Activated CD4-positive, alpha-beta T cell treated with anti-CD3 and anti-CD28 coated beads for 36 hours (primary cell): ENCODE measurements at regions of chr1 and their contacts with region 1.

Region 1: DNA sequence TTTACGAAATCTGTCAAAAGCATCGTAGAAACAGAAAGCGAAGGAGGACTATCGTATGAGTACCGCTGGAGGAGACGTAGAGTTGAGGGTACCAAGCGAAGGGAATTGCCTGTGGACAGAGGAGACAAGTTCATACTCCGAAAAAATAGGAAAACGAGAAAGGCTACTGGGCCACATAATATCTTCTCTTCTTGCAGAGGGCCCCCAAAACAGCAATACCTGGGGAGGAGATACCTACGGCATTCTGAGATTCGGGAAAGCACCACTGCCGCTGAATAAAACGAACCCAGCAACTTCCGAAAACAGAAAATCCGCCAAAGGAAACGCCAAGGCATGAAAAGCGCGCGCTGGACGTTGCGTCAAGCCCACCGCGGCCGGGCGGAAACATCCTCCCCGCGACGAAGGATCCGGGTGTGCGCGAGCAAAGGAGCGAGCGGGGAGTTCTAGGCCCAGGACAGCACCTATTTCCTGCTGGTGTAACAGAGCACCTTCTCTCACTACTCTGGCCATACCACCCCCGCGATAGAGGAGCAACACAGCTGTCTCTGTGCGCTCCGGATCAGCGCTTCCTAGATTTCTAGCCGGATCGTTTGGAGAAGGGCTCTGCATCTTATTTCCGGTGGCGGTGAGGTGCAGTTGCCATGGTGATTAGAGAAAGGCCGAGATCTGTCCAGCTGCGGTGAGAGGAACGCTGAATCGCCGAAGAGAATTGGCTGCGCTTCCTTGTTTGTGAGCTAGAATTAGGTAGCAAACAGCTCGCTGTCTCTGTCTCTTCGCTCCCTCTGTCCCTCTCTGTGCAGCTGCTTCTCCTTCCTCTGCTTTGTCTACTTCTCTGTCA is at the starts of genes EFCAB7 and ITGB3BP:
- DNase-seq: peak; percentile 90
- ATAC-seq: peak; percentile 93
- H3K4me3 Mint-ChIP-seq: peak within 1 kb of the TSS; percentile 89
- H3K27ac Mint-ChIP-seq: peak within 1 kb of the TSS; percentile 97
- H3K4me1 Mint-ChIP-seq: peaks cover 18% of the 10 kb centered on the region
- H3K27me3 Mint-ChIP-seq: no peaks in the 10 kb centered on the region
- total RNA-seq, gene EFCAB7: 8.5 to 9.1 TPM
- total RNA-seq, gene ITGB3BP: 81.8 to 81.9 TPM

Region 2: DNA sequence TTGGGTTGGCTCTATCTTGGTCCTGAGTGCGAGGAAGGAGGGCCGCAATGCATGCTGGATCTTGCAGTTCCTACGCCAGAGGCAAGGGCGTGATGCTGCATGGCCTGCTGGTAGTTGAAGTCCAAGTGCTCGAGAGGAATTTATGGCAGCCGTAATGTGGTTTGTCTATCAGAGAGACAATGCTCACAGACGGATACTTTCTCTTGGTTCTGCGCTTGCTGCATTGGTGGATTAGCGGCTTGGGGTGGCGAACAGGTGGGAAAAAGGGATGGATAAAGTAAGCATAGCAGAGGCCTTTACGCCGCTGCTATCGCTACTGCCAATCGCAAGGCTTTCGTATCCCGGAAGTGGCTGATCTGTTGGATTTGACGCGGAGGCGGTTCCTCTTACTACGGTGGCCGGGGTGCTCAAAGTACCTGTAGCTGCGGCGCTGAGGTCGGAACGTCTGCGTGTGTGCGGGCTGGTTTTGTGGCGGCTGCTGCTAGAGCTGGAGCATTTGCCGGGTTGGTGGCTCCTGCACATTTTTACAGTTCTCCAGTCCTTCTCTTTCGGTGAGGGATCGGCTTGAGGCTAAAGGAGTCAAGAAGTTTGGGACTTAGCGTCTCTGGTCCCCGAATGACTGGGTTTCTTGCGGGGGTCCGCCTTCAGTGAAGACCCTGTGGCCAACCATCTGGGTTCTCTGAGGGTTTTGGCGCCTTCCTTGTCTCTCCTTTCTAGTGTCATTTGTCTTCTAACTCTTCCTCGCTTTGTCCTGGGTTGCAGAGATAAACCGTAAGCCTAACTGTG is 739.2 kb before region 1 on chr1 and contains the start of gene ATG4C:
- CTCF ChIA-PET with region 1: interaction called, 3 read pairs
- POLR2A ChIA-PET with region 1: no interaction called
- intact Hi-C with region 1: loop called (anchors 1 to 5 kb)
- DNase-seq: peak; percentile 96
- ATAC-seq: peak; percentile 99
- H3K4me3 Mint-ChIP-seq: no peak within 1 kb of the TSS
- H3K27ac Mint-ChIP-seq: no peak within 1 kb of the TSS
- H3K4me1 Mint-ChIP-seq: peaks cover 17% of the 10 kb centered on the region
- H3K27me3 Mint-ChIP-seq: peaks cover 10% of the 10 kb centered on the region
- total RNA-seq, gene ATG4C: 16.2 to 17.7 TPM

Region 3: DNA sequence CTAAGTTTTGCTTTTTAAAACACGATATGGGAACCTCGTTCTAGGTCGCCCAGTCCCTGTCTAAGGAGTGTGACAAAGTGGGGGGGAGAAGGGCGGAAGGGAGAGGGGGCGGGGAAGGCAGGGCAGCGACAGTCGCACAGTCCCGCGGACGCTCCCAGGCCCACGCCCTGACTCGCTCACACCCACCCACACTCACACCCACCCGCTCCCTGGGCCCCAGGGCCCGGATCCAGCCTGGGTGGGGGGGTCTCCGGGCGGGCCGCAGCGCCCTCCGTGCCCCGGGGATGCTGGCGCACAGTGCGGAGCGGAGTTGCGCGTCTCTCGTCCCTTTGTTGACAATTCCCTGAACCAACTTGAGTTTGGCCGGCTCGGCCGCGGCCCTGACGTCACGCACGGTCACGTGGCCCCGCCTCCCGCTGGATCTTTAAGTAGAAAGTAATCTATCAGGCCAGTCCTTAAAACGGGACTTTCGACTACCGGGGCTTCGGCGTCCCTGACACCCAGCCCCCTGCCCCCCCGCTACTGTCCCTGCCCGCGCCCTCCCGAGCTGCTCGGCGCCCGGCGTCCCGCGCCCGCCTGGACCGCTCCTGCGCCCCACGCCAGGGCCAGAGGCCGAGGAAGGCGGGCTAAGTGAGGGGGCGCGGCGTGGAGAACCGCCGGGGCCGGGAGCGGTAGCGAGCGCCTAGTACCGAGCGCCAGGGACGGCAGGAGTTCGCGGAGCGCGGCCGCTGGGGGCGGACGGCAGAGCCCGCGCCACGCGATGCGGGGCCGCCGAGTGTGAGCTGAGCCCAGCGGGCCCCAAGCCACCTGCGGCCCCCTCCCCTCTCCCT is 200.8 kb before region 1 on chr1 and contains the start of gene FOXD3:
- CTCF ChIA-PET with region 1: interaction called, 3 read pairs
- POLR2A ChIA-PET with region 1: no interaction called
- intact Hi-C with region 1: loop called (anchors 2 to 5 kb)
- DNase-seq: peak; percentile 64
- ATAC-seq: peak; percentile 34
- H3K4me3 Mint-ChIP-seq: peak within 1 kb of the TSS; percentile 68
- H3K27ac Mint-ChIP-seq: peak within 1 kb of the TSS; percentile 37
- H3K4me1 Mint-ChIP-seq: peaks cover 43% of the 10 kb centered on the region
- H3K27me3 Mint-ChIP-seq: peaks cover 68% of the 10 kb centered on the region
- total RNA-seq, gene FOXD3: not detected

Region 4: DNA sequence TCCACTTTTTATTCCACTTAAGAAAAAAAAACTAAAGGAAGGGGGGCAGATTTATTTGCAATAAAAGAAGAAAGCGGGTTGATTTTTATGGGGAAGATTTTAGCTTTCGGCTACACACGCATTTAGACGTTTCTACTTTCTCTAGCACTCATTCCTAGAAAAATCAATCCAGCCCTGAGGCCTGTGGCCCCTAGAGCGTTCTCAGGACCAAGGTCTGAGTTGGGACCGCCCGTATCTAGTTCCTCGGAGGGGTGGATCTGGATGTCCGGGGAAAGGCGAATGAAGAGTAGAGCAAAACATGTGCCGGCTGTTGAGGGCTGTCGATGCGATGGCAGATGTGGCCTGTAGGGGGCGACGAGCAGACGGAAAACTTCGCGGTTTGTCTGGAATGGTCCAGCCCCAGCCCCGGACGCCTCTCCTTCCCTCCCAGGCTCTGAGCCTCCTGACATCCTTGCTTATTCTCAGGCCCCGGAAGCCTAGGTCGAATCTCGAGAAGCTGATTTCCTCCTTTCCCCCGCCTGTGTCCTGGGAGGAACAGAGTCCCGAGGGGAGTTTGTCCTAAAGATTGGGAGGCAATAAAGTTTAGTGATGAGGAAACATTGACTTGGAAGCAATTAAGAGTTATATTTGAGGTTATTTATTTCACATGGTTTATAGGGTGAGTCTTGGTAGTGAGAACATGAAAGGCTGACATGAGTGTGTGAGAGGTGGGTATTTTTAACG is 195.5 kb before region 1 on chr1:
- CTCF ChIA-PET with region 1: interaction called, 3 read pairs
- POLR2A ChIA-PET with region 1: no interaction called
- intact Hi-C with region 1: loop called (anchors 2 to 5 kb)
- DNase-seq: peak; percentile 79
- ATAC-seq: peak; percentile 61
- H3K4me3 Mint-ChIP-seq: peak overlapping the region; percentile 0
- H3K27ac Mint-ChIP-seq: no peak overlapping the region
- H3K4me1 Mint-ChIP-seq: peaks cover 24% of the 10 kb centered on the region
- H3K27me3 Mint-ChIP-seq: peaks cover 61% of the 10 kb centered on the region

Region 5: GRCh38 chr1:63367215-63368103 is 155.7 kb before region 1 on chr1 and contains the start of gene ALG6:
- CTCF ChIA-PET with region 1: no interaction called
- POLR2A ChIA-PET with region 1: no interaction called
- intact Hi-C with region 1: loop called (anchors 1 kb)
- DNase-seq: peak; percentile 94
- ATAC-seq: peak; percentile 94
- H3K4me3 Mint-ChIP-seq: peak within 1 kb of the TSS; percentile 98
- H3K27ac Mint-ChIP-seq: peak within 1 kb of the TSS; percentile 82
- H3K4me1 Mint-ChIP-seq: peaks cover 23% of the 10 kb centered on the region
- H3K27me3 Mint-ChIP-seq: peaks cover 5% of the 10 kb centered on the region
- total RNA-seq, gene ALG6: 16.2 to 16.3 TPM

Region 6: DNA sequence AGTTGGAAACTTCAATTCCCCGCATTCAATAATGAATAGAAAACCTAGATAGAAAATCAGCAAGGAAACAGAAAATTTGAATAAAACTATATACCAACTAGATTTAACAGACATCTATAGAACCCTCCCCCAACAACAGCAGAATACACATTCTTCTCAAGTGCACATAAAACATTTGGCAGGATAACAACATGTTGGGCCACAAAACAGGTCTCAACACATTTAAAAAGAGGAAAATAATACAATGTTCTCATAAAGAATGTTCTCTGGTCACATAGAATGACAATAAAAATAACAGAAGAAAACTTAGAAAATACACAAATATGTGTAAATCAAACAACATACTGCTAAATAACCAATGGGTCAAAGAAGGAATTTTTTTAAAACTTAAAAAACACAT is 25.0 kb before region 1 on chr1:
- CTCF ChIA-PET with region 1: no interaction called
- POLR2A ChIA-PET with region 1: no interaction called
- intact Hi-C with region 1: no loop called
- DNase-seq: no peak
- ATAC-seq: no peak
- H3K4me3 Mint-ChIP-seq: no peak overlapping the region
- H3K27ac Mint-ChIP-seq: no peak overlapping the region
- H3K4me1 Mint-ChIP-seq: peaks cover 2% of the 10 kb centered on the region
- H3K27me3 Mint-ChIP-seq: no peaks in the 10 kb centered on the region

Region 7: GRCh38 chr1:63537940-63538339 is 14.8 kb after region 1 on chr1:
- CTCF ChIA-PET with region 1: interaction called, 10 read pairs
- POLR2A ChIA-PET with region 1: interaction called, 4 read pairs
- intact Hi-C with region 1: no loop called
- DNase-seq: no peak
- ATAC-seq: no peak
- H3K4me3 Mint-ChIP-seq: no peak overlapping the region
- H3K27ac Mint-ChIP-seq: no peak overlapping the region
- H3K4me1 Mint-ChIP-seq: no peaks in the 10 kb centered on the region
- H3K27me3 Mint-ChIP-seq: no peaks in the 10 kb centered on the region

Region 8: DNA sequence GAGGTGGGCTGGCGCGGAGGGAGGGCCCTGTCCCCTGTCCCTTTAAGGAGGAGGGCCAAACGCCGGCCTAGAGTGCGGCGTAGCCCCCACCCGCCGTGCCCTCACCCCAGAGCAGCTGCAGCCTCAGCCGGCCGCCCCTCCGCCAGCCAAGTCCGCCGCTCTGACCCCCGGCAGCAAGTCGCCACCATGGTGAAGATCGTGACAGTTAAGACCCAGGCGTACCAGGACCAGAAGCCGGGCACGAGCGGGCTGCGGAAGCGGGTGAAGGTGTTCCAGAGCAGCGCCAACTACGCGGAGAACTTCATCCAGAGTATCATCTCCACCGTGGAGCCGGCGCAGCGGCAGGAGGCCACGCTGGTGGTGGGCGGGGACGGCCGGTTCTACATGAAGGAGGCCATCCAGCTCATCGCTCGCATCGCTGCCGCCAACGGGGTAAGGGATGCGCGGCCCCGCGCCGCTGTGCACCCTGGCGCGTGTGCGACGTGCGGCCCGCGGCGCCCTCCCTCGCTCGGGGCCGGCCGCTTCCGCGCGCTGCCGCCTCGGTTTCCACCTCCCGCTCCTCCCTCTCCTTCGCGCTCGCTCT is 70.3 kb after region 1 on chr1 and contains the start of gene PGM1:
- CTCF ChIA-PET with region 1: no interaction called
- POLR2A ChIA-PET with region 1: no interaction called
- intact Hi-C with region 1: loop called (anchors 1 to 2 kb)
- DNase-seq: peak; percentile 89
- ATAC-seq: peak; percentile 85
- H3K4me3 Mint-ChIP-seq: peak within 1 kb of the TSS; percentile 97
- H3K27ac Mint-ChIP-seq: peak within 1 kb of the TSS; percentile 96
- H3K4me1 Mint-ChIP-seq: peaks cover 27% of the 10 kb centered on the region
- H3K27me3 Mint-ChIP-seq: no peaks in the 10 kb centered on the region
- total RNA-seq, gene PGM1: 38.8 to 43.8 TPM